ENCODE measurements at regions of chr21 and their contacts with region 1.

Region 1: DNA sequence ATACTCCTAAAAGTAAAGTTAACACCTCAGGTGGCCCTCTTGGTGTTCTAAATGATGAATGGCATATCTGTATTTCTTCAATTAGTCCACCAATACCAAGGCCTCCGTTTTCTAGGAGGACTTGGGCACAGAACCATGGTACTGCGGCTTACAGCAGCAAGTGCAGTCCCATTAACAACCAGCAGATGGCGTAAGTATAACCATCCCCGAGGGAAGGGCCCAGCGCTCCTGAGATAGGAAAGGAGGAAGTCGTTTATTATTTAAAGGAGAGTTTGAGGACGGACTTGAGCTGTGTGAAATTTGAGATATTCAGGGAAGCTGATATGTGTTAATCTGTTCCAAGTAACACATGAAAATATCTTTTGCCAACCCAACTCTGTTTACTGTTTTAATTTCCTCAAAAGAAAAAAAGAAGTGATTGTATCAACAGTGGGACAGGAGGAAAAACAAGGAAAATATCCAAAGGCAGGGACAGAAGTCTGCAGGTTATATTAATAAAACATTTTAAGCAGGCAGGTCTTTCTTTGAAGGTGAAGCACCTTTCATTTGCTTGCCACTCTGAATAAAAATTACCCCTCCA is 37.7 kb upstream of the KCNJ15 start:
- DNase-seq: peak; percentile 58
- H3K4me3 ChIP-seq: no peak overlapping the region
- H3K27ac ChIP-seq: no peak overlapping the region
- H3K27me3 ChIP-seq: no peaks in the 10 kb centered on the region
- CTCF ChIP-seq: peak; percentile 98

Region 2: DNA sequence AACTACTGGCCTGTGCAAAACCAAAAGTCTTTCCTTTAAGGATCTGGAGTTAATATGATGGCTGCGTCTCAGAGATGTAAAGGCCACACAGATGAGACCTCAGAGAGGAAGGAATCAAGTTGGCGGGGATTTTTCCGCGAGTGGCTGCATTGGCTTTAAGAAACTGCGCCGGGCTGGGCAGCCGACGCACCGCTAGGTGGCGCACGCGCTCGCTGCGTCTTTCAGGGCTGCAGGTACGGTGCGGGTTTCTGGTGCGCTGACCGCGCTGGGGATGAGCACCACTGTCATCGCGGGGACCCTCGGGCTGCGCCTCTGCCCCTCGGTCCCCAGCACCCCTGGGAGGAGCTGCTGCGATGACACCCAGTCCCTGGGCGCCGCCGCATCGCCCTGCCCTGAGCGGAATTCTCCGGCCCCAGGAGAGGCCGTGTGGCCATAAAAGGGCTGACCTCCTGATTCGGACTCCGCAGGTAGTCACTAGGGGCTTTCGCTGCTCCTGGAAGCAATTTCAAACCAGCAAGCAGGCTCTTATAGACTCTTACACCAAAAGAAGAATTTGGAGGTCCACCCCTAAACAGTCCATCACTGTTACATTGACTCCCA is 543.8 kb before region 1 on chr21:
- CTCF ChIA-PET with region 1: interaction called, 10 read pairs
- POLR2A ChIA-PET with region 1: no interaction called
- DNase-seq: no peak
- H3K4me3 ChIP-seq: no peak overlapping the region
- H3K27ac ChIP-seq: no peak overlapping the region
- H3K27me3 ChIP-seq: peaks cover 18% of the 10 kb centered on the region
- CTCF ChIP-seq: peak; percentile 90

Region 3: GRCh38 chr21:38014298-38014697 is 204.8 kb before region 1 on chr21:
- CTCF ChIA-PET with region 1: no interaction called
- POLR2A ChIA-PET with region 1: no interaction called
- DNase-seq: no peak
- H3K4me3 ChIP-seq: no peak overlapping the region
- H3K27ac ChIP-seq: no peak overlapping the region
- H3K27me3 ChIP-seq: no peaks in the 10 kb centered on the region
- CTCF ChIP-seq: no peak

Region 4: GRCh38 chr21:38159355-38159754 is 59.8 kb before region 1 on chr21:
- CTCF ChIA-PET with region 1: interaction called, 30 read pairs
- POLR2A ChIA-PET with region 1: no interaction called
- DNase-seq: peak; percentile 74
- H3K4me3 ChIP-seq: no peak overlapping the region
- H3K27ac ChIP-seq: no peak overlapping the region
- H3K27me3 ChIP-seq: peaks cover 8% of the 10 kb centered on the region
- CTCF ChIP-seq: peak; percentile 90

Region 5: DNA sequence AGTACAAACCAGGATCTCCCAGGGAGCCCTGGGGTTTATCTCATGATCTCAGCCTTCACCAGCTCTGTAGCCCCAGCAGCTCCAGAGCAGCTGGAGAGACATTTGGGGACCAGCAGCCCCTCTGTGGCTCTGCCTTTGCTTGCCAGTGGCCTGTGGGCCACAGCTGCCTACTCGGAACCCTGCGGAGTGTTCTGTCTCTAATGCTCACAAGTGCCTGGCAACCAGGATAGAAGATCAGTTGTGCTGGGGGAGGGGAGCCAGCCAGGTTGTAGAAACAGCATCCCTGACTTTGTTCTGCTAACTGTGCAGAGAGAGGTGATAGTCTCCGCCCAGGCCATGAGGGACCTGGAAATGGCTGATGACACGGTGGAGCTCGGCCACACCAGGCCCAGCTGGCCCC is 13.2 kb before region 1 on chr21:
- CTCF ChIA-PET with region 1: interaction called, 19 read pairs
- POLR2A ChIA-PET with region 1: no interaction called
- DNase-seq: no peak
- H3K4me3 ChIP-seq: no peak overlapping the region
- H3K27ac ChIP-seq: no peak overlapping the region
- H3K27me3 ChIP-seq: peaks cover 32% of the 10 kb centered on the region
- CTCF ChIP-seq: no peak

Region 6: GRCh38 chr21:38306433-38307141 is 87.4 kb after region 1 on chr21:
- CTCF ChIA-PET with region 1: interaction called, 10 read pairs
- POLR2A ChIA-PET with region 1: no interaction called
- DNase-seq: peak; percentile 93
- H3K4me3 ChIP-seq: no peak overlapping the region
- H3K27ac ChIP-seq: peak overlapping the region; percentile 81
- H3K27me3 ChIP-seq: no peaks in the 10 kb centered on the region
- CTCF ChIP-seq: no peak

Region 7: GRCh38 chr21:38343693-38344092 is 124.6 kb after region 1 on chr21:
- CTCF ChIA-PET with region 1: interaction called, 19 read pairs
- POLR2A ChIA-PET with region 1: no interaction called
- DNase-seq: no peak
- H3K4me3 ChIP-seq: no peak overlapping the region
- H3K27ac ChIP-seq: no peak overlapping the region
- H3K27me3 ChIP-seq: no peaks in the 10 kb centered on the region
- CTCF ChIP-seq: no peak